ENCODE measurements at regions of chr4 and their contacts with region 1.

Region 1: GRCh38 chr4:8241895-8242696 is 27.5 kb upstream of the HTRA3 start:
- DNase-seq: peak; percentile 81 to 88 (median 86)
- ATAC-seq: peak; percentile 71
- H3K4me3 ChIP-seq: no peak overlapping the region
- H3K4me1 ChIP-seq: peaks cover 3% of the 10 kb centered on the region
- CTCF ChIP-seq: peak; percentile 93

Region 2: DNA sequence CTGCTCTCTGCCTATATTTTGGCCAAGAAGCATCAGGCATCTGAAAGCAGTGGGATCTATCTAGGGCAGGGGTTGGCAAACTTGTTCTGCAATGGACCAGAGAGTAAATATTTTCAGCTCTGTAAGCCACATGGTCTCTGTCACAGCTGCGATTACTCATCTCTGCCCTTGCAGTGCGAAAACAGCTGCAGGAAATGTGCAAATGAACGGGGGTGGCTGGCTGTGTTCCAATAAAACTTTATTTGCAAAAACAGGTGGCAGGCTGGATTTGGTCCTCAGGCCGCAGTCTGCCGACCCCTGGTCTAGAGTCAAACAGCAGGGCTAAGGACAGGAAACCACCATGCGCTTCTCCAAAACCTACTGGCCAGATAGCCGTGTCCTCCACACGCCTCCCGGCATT is 149.9 kb after region 1 on chr4:
- intact Hi-C with region 1: no loop called
- DNase-seq: peak in 1 of 3 donors; percentile 61
- ATAC-seq: peak; percentile 58
- H3K4me3 ChIP-seq: no peak overlapping the region
- H3K4me1 ChIP-seq: no peaks in the 10 kb centered on the region
- CTCF ChIP-seq: no peak

Region 3: GRCh38 chr4:8403173-8403753 is 161.2 kb after region 1 on chr4:
- intact Hi-C with region 1: loop called (anchors 5 kb)
- DNase-seq: peak in 2 of 3 donors; percentile 81 to 82
- ATAC-seq: peak; percentile 82
- H3K4me3 ChIP-seq: no peak overlapping the region
- H3K4me1 ChIP-seq: peaks cover 2% of the 10 kb centered on the region
- CTCF ChIP-seq: peak; percentile 77

Region 4: GRCh38 chr4:8409264-8410065 is 167.4 kb after region 1 on chr4:
- intact Hi-C with region 1: loop called (anchors 5 kb)
- DNase-seq: peak; percentile 59 to 81 (median 73)
- ATAC-seq: peak; percentile 80
- H3K4me3 ChIP-seq: no peak overlapping the region
- H3K4me1 ChIP-seq: peaks cover 18% of the 10 kb centered on the region
- CTCF ChIP-seq: no peak

Measured in mucosa of descending colon (tissue), 3 donors.